Dendritic cell treated with granulocyte-macrophage colony-stimulating factor and Interleukin-4, amounts not matched to agents 40 ng/mL and 50 ng/mL, for 4 days (primary cell): ENCODE measurements at regions of chr6 and their contacts with region 1.

Region 1: GRCh38 chr6:41779793-41780545 is at the start of gene FRS3:
- H3K4me3 Mint-ChIP-seq: peak within 1 kb of the TSS; percentile 84
- H3K27ac Mint-ChIP-seq: peak within 1 kb of the TSS; percentile 74
- H3K4me1 Mint-ChIP-seq: peaks cover 62% of the 10 kb centered on the region
- H3K27me3 Mint-ChIP-seq: peaks cover 1% of the 10 kb centered on the region

Region 2: GRCh38 chr6:41344876-41345275 is 435.1 kb before region 1 on chr6:
- intact Hi-C with region 1: no loop called
- H3K4me3 Mint-ChIP-seq: no peak overlapping the region
- H3K27ac Mint-ChIP-seq: no peak overlapping the region
- H3K4me1 Mint-ChIP-seq: no peaks in the 10 kb centered on the region
- H3K27me3 Mint-ChIP-seq: peaks cover 43% of the 10 kb centered on the region

Region 3: GRCh38 chr6:41602864-41603608 is 176.9 kb before region 1 on chr6:
- intact Hi-C with region 1: loop called (anchors 5 kb)
- H3K4me3 Mint-ChIP-seq: no peak overlapping the region
- H3K27ac Mint-ChIP-seq: no peak overlapping the region
- H3K4me1 Mint-ChIP-seq: no peaks in the 10 kb centered on the region
- H3K27me3 Mint-ChIP-seq: peaks cover 5% of the 10 kb centered on the region

Region 4: DNA sequence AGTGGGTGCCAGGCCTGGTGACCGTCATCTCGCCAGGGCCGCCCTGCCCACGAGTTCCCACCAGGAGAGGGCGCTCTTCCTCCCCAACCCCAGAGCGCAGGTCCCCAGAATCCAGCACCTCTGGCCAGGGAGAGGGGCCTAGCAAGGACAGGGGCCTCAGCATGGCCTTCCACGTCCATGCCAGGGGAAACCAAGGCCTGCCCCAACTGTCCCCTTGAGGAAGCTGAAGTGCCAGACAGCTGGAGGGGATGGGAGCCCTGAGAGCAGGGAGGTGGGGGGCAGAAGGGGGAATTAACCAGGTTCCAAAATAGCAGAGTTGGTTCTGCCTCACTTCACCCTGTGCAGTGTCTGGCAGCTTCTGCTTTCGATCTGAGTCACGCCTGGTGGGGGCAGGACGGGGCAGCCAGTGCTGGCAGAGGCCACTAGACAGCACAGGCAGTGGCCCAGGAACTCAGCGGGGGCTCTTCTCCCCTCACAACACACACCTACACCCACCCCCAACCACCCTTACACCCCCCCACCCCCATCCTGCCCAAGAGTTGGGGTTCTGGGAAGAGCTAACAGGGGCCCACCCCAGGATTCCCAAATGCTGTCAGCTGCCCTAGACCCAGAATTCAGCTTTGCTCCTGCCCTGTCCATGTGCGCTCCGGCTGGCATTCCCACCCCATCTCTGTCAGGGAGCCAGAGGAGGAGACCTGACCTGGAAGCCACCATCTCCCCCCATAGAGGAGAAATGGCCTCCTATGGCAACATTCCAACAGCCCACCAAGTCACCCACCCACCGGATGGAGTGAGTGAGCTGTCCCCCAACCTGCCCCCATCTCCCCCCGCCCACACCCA is 73.8 kb before region 1 on chr6:
- intact Hi-C with region 1: loop called (anchors 2 kb)
- H3K4me3 Mint-ChIP-seq: peak overlapping the region; percentile 49
- H3K27ac Mint-ChIP-seq: peak overlapping the region; percentile 88
- H3K4me1 Mint-ChIP-seq: peaks cover 81% of the 10 kb centered on the region
- H3K27me3 Mint-ChIP-seq: no peaks in the 10 kb centered on the region

Region 5: DNA sequence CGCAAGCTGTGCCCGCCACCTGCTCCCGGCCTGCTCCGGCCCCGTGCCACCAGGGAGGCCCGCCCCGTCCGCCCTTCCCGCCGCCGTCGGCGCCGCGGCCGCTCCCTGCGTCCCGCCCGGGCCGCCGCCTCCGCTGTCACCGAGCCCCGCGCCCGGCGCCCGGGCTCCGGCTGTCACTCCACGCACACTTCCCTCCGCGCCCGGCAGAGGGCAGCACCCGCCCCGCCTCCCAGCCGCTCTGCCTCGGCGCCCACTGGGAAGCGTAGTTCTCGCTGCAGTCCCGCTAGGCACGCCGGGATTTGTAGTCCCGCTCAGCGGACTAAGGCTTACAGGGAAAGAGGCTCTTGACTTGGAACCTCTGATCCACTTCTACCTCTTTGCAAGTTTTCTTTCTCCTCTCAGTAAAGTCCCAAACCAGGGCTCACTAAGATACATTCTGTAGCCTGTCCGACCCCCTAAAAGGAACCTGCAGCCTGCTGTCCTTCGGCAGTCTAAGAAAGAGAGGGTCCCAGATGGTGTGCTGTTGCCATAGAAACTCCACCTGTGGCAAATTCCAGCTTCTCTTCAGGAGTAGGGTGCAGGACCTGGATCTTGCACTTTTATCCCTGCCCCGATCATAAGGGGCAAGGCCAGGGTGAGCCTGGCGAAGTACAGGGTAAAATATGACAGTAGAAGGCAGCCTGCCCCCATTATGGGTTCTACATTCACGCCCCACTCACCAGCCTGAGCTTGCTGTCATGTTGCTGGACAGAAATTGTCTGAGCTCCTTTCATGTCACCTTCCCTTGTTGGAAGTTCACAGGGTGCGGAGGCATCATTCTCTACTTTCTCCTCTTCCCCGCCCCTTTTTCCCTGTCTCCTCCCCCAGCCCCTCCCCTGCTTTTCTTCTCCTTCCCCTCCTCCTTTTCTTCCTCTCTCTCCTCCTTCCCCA is 44.3 kb before region 1 on chr6 and contains the start of gene TFEB:
- intact Hi-C with region 1: loop called (anchors 5 kb)
- H3K4me3 Mint-ChIP-seq: peak within 1 kb of the TSS; percentile 83
- H3K27ac Mint-ChIP-seq: peak within 1 kb of the TSS; percentile 85
- H3K4me1 Mint-ChIP-seq: peaks cover 42% of the 10 kb centered on the region
- H3K27me3 Mint-ChIP-seq: no peaks in the 10 kb centered on the region

Region 6: DNA sequence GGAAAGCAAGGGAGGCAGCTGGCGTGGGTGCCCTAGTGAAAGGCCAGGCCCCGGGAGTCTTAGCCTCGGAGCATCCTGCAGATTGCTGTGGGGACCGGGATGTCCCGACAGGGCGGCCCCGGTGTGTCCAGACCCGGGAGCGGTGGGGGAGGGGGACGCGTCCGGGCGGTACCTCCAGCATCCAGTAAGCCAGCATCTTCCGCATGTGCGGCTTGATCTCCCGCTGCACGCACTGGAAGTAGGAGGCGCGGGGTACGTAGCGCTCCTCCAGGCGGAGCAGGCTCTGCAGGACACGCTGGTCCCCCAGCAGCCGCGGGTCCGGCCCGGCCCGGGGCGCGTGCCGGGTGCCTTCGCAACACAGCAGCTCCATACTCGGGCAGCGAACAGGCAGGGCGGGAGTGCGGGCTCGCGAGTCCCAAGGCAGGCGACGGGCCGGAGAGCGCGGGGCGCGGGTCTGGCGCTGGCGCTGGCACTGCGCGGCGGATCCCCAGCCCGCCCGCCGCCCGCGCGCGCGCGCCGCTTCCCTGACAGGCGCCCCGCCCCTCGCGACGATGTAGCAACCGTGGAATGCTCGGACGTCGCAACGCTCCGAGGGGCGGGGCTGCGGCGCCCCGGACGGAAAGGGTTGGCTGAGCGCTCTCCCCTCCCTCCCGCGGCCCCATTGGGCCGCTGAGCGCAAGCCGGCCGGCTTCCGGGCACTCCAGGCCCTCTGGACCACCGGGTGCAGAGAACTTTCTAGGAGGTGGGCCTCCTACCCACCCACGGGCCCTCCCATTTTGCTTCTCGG is 161.5 kb after region 1 on chr6 and contains the start of gene CCND3:
- intact Hi-C with region 1: loop called (anchors 5 kb)
- H3K4me3 Mint-ChIP-seq: peak within 1 kb of the TSS; percentile 99
- H3K27ac Mint-ChIP-seq: peak within 1 kb of the TSS; percentile 90
- H3K4me1 Mint-ChIP-seq: peaks cover 51% of the 10 kb centered on the region
- H3K27me3 Mint-ChIP-seq: no peaks in the 10 kb centered on the region

Region 7: DNA sequence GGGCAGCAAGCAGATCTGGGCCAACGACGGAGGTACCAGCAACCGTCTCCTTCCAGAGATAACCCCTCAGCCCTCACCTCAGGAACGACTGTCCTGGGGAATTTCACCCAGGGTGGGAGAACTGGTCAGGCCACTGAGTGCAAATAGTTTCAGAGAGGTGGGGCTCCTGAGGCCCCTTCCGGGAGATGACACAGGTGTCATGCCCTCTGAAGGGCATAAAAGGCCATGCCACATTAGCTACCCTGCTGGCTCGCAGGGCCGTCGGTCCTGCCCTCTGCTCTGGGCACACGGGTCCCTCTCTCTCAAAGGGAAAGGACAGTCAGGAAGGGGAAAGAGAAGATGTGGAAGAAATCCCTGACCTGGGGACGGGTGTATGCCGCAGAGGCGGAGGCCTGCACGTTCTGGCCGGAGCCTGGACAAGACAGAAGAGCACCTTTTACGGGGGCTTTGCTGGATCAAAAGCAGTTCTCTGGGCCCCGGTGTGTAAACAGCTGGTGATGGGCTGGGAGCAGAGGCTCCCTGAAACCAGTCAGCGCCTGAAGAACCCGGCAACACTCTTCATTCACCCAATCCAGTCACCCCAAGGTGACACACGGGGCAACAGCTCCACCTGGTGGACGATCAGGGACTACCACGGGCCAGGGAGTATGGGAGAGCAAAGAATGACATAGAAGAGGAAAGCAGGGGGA is 264.0 kb after region 1 on chr6:
- intact Hi-C with region 1: loop called (anchors 1 kb)
- H3K4me3 Mint-ChIP-seq: no peak overlapping the region
- H3K27ac Mint-ChIP-seq: no peak overlapping the region
- H3K4me1 Mint-ChIP-seq: peaks cover 57% of the 10 kb centered on the region
- H3K27me3 Mint-ChIP-seq: peaks cover 13% of the 10 kb centered on the region

Region 8: GRCh38 chr6:42118162-42119001 is 338.4 kb after region 1 on chr6:
- intact Hi-C with region 1: no loop called
- H3K4me3 Mint-ChIP-seq: no peak overlapping the region
- H3K27ac Mint-ChIP-seq: no peak overlapping the region
- H3K4me1 Mint-ChIP-seq: peaks cover 11% of the 10 kb centered on the region
- H3K27me3 Mint-ChIP-seq: peaks cover 18% of the 10 kb centered on the region